Endothelial cell of umbilical vein (primary cell): ENCODE measurements at regions of chr10 and their contacts with region 1.

Region 1: DNA sequence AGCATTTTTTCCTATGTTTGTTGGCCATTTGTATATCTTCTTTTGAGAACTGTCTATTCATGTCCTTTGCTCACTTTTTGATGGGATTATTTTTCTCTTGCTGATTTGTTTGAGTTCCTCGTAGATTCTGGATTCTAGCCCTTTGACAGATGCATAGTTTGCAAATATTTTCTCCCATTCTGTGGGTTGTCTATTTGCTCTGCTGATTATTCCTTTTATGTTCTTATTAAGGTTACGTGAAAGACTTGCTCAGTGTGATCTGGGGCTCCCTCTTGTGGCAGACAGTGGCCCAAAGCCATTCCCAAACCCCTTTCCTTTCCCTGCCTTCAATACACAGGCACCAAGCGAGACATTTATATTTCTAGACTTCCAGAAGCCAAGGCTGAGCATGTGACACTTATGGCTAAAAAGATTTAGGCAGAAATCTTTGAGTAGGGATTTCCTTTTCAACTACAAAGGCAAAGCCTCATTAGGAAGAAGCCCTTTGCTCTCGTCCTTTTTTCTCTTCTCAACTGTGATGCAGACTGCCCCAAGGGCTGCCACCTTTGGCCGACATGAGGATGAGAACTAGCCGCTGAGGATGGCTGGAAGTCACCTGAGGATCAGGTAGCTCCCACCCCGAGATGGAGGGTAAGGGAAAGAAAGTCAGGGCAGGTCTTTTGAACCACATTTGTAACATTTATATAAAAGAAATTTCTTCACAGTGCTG is 23.6 kb downstream of the ST8SIA6 start:
- DNase-seq: peak; percentile 87
- H3K4me3 ChIP-seq: no peak overlapping the region
- H3K27ac ChIP-seq: no peak overlapping the region
- H3K4me1 ChIP-seq: peaks cover 22% of the 10 kb centered on the region
- H3K27me3 ChIP-seq: no peaks in the 10 kb centered on the region
- CTCF ChIP-seq: peak; percentile 84 to 90
- POLR2A ChIP-seq: no peak

Region 2: GRCh38 chr10:16765509-16766375 is 665.1 kb before region 1 on chr10:
- CTCF ChIA-PET with region 1: no interaction called
- POLR2A ChIA-PET with region 1: no interaction called
- dilution Hi-C with region 1: no loop called
- intact Hi-C with region 1: no loop called
- DNase-seq: no peak
- H3K4me3 ChIP-seq: no peak overlapping the region
- H3K27ac ChIP-seq: no peak overlapping the region
- H3K4me1 ChIP-seq: no peaks in the 10 kb centered on the region
- H3K27me3 ChIP-seq: no peaks in the 10 kb centered on the region
- CTCF ChIP-seq: no peak
- POLR2A ChIP-seq: no peak

Region 3: GRCh38 chr10:16843252-16843870 is 587.4 kb before region 1 on chr10:
- CTCF ChIA-PET with region 1: no interaction called
- POLR2A ChIA-PET with region 1: no interaction called
- dilution Hi-C with region 1: no loop called
- intact Hi-C with region 1: loop called (anchors 1 kb)
- DNase-seq: peak; percentile 83
- H3K4me3 ChIP-seq: no peak overlapping the region
- H3K27ac ChIP-seq: peak overlapping the region; percentile 32
- H3K4me1 ChIP-seq: peaks cover 2% of the 10 kb centered on the region
- H3K27me3 ChIP-seq: no peaks in the 10 kb centered on the region
- CTCF ChIP-seq: peak; percentile 19 to 27
- POLR2A ChIP-seq: no peak

Region 4: DNA sequence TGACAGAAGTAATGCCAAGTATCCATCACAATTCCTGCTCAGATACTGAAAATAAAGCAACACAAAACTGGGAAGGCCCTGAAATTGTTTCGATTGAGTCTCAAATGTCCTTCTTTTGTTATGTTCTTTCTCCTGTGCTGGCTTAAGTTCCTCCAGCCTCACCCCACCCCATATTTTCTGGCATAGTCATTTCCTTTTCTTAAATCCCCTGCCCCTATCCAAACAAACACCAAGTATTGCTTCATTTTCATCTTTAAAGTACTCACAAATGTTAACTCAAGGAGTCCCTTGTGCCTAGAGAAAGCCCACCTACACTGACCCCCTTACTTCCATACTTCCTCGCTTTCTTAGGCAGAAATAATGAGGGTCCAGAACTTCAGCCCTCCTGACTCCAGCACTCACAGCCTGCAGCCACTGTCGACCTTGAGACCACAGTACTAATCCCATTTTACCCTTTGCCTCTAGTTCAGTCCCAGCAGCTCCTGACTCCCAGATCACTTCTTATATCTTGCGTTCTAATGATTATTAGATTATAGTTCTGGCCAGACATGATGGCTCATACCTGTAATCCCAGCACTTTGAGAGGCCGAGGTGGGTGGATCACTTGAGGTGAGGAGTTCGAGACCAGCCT is 96.8 kb after region 1 on chr10:
- CTCF ChIA-PET with region 1: no interaction called
- POLR2A ChIA-PET with region 1: no interaction called
- dilution Hi-C with region 1: no loop called
- intact Hi-C with region 1: loop called (anchors 5 kb)
- DNase-seq: peak; percentile 87
- H3K4me3 ChIP-seq: no peak overlapping the region
- H3K27ac ChIP-seq: peak overlapping the region; percentile 98
- H3K4me1 ChIP-seq: peaks cover 23% of the 10 kb centered on the region
- H3K27me3 ChIP-seq: no peaks in the 10 kb centered on the region
- CTCF ChIP-seq: no peak
- POLR2A ChIP-seq: peak; percentile 21

Region 5: GRCh38 chr10:17599089-17599488 is 168.3 kb after region 1 on chr10:
- CTCF ChIA-PET with region 1: interaction called, 3 read pairs
- POLR2A ChIA-PET with region 1: no interaction called
- dilution Hi-C with region 1: no loop called
- intact Hi-C with region 1: loop called (anchors 1 kb)
- DNase-seq: peak; percentile 63
- H3K4me3 ChIP-seq: no peak overlapping the region
- H3K27ac ChIP-seq: no peak overlapping the region
- H3K4me1 ChIP-seq: no peaks in the 10 kb centered on the region
- H3K27me3 ChIP-seq: no peaks in the 10 kb centered on the region
- CTCF ChIP-seq: peak; percentile 43 to 44
- POLR2A ChIP-seq: no peak

Region 6: DNA sequence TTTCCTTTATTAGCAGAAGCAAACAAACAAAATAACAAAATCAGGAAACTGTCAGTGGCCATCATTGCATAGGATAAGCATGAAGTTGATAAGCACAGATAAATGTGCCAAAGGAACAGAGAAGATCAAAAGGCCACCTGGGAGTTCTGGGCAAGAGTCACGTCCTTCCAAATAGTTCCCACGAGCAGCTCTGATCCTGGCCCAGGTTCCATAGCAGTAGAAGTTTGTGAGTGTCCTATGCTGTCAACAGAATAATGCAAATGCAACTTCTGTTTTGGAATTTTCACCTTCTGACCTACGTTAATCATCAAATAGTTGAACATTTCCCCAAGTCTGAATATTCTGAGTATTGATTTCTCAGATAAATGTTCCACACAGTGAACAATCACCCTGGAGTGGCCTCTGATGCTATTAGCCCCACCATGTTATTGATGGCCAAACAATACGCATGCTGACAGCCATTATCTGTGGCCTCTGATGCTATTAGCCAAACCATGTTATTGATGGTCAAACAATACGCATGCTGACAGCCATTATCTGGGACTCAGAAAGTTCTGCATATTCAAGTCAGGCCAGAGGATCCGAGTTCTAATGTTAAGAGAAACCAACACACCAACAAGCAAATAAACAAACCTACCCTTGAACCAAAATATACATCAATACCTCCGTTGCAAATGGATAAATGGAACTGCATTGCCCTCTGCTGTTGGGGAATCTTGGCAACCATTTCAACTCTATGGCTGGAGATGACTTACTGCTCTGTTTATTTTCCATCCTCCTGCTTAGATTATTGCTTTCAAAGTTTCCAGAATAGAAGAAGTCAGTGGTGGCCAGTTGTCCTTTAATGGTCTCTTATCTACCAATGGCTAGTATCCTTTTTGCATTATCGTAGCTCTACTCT is 441.6 kb after region 1 on chr10:
- CTCF ChIA-PET with region 1: interaction called, 3 read pairs
- POLR2A ChIA-PET with region 1: no interaction called
- dilution Hi-C with region 1: no loop called
- intact Hi-C with region 1: loop called (anchors 10 kb)
- DNase-seq: peak; percentile 73
- H3K4me3 ChIP-seq: no peak overlapping the region
- H3K27ac ChIP-seq: no peak overlapping the region
- H3K4me1 ChIP-seq: no peaks in the 10 kb centered on the region
- H3K27me3 ChIP-seq: no peaks in the 10 kb centered on the region
- CTCF ChIP-seq: peak; percentile 57 to 58
- POLR2A ChIP-seq: no peak